Posterior vena cava (tissue), 2 donors: ENCODE measurements at regions of chr7 and their contacts with region 1.

Region 1: GRCh38 chr7:121157341-121157751 is 168.8 kb downstream of the CPED1 start:
- DNase-seq: no peak

Region 2: DNA sequence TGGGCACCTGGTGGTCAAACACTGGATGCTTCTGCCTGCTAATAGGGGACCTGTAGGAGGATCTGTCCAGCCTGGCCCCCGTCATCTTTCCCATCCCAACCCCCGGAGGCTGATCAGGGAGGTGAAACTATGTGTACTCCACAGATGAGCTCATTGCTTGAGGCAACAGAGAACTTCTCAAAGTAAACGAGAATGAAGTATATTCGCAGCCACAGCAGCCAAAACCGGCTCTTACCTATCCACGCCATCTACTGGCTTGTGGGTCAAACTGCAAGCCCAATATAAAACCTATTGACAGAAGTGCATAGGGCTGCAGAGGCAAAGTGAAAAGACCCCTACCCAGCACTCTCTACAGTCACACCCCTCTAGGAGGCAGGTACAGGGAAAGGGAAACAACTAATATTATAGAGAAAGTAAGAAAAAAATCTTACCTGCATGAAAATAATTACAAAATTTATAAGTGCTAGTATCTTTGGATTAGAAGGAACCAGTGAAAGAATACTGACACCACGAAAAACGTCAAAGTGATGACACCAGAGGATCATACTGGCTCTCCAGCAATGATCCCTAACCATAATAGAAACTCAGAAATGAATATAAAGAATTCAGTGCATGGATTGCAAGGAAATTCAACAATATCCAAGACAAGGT is 1959.3 kb before region 1 on chr7:
- intact Hi-C with region 1: loop called in 1 of 2 experiments (anchors 5 kb)
- DNase-seq: peak; percentile 26

Region 3: DNA sequence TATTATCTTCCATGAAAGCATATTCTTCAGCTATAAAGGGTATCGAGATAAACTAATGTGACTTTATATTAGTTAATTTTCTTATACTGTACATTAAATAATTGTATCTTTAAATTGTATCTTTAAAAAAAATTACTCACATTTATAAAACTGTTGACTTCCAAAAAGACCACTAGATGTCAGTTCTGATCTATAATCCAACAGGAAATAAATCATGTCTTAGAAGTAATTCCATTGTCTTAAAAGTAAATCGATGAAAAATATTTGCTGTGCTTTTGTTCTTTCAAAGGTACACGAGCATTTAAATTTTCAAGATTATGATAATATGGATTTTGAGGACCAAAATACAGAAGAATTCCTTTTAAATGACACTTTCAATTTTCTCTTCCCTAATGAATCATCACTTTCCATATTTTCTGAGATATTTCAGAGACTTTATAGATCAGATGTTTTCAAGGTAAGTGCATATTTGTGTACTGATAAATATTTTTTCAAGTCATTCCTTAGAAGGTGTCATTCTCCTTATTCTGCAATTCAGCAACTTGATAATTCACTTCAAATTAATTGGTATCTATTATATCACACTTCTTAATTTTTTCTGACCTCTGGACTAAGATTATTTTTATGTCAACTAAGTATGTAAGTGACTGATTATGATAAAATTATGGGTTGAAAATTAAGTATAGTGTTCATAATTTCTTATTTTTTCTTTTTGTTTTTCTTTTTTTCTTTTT is 30.4 kb before region 1 on chr7:
- intact Hi-C with region 1: no loop called
- DNase-seq: no peak